A673 (cell line): ENCODE measurements at regions of chr4 and their contacts with region 1.

Region 1: GRCh38 chr4:81040012-81040659 is 9.6 kb downstream of the BMP3 start:
- DNase-seq: peak; percentile 16
- H3K4me3 ChIP-seq: no peak overlapping the region
- H3K27ac ChIP-seq: no peak overlapping the region
- H3K4me1 ChIP-seq: no peaks in the 10 kb centered on the region
- H3K27me3 ChIP-seq: peaks cover 19% of the 10 kb centered on the region
- CTCF ChIP-seq: peak; percentile 53

Region 2: DNA sequence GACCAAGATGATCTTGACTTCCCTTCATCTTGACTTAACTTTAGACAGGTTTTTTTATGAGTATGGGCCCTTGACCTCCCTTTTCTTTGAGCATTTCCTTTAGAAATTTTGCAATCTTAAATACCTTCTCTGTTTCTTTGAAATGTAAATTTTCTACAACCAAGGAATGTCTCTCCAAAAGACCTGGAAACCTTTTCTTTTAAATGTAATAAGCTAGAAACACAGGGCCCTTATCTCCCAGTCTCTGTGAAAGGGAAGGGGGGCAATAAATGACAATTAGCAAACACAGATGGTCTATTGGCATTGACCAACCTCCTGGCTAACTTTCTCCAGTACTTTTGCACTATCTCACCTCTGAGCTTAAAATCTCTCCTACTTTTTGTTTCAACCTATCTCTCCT is 1487.8 kb before region 1 on chr4:
- CTCF ChIA-PET with region 1: no interaction called
- POLR2A ChIA-PET with region 1: no interaction called
- intact Hi-C with region 1: no loop called
- DNase-seq: no peak
- H3K4me3 ChIP-seq: no peak overlapping the region
- H3K27ac ChIP-seq: no peak overlapping the region
- H3K4me1 ChIP-seq: no peaks in the 10 kb centered on the region
- H3K27me3 ChIP-seq: no peaks in the 10 kb centered on the region
- CTCF ChIP-seq: no peak

Region 3: DNA sequence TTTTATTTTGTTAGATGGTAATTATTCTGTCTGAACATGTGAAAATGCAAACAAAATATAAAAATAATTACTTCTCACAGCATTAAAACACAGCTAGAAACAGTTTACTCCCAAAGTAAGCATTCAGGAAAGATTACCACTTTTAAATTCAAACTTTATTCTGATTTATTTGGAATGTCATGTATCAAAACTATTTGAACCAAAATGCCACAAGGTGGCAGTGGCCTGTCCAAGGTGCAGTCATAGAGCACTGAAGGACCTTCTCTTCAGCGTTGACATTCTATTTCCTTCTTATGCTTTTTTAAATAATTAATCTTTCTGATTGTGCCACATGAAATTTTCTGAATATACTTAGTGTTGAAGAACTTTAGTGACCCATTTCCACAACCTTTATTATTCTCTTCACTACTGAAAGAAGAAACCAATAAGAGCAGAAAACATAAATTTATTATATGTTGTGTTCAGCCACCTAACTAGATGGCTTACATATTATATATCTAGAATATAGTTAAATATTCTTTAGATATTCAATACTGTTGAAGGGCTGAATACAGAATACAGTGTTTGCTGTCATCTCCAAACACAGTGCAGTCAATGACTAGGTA is 421.0 kb before region 1 on chr4:
- CTCF ChIA-PET with region 1: no interaction called
- POLR2A ChIA-PET with region 1: no interaction called
- intact Hi-C with region 1: loop called (anchors 2 kb)
- DNase-seq: no peak
- H3K4me3 ChIP-seq: no peak overlapping the region
- H3K27ac ChIP-seq: no peak overlapping the region
- H3K4me1 ChIP-seq: no peaks in the 10 kb centered on the region
- H3K27me3 ChIP-seq: no peaks in the 10 kb centered on the region
- CTCF ChIP-seq: no peak